Activated naive CD4-positive, alpha-beta T cell treated with anti-CD3 and anti-CD28 coated beads for 36 hours (primary cell): ENCODE measurements at regions of chr17 and their contacts with region 1.

Region 1: GRCh38 chr17:29252101-29252866 is 5.6 kb downstream of the CRYBA1 start:
- DNase-seq: no peak
- H3K4me3 Mint-ChIP-seq: no peak overlapping the region
- H3K27ac Mint-ChIP-seq: no peak overlapping the region
- H3K4me1 Mint-ChIP-seq: peaks cover 11% of the 10 kb centered on the region
- H3K27me3 Mint-ChIP-seq: no peaks in the 10 kb centered on the region

Region 2: DNA sequence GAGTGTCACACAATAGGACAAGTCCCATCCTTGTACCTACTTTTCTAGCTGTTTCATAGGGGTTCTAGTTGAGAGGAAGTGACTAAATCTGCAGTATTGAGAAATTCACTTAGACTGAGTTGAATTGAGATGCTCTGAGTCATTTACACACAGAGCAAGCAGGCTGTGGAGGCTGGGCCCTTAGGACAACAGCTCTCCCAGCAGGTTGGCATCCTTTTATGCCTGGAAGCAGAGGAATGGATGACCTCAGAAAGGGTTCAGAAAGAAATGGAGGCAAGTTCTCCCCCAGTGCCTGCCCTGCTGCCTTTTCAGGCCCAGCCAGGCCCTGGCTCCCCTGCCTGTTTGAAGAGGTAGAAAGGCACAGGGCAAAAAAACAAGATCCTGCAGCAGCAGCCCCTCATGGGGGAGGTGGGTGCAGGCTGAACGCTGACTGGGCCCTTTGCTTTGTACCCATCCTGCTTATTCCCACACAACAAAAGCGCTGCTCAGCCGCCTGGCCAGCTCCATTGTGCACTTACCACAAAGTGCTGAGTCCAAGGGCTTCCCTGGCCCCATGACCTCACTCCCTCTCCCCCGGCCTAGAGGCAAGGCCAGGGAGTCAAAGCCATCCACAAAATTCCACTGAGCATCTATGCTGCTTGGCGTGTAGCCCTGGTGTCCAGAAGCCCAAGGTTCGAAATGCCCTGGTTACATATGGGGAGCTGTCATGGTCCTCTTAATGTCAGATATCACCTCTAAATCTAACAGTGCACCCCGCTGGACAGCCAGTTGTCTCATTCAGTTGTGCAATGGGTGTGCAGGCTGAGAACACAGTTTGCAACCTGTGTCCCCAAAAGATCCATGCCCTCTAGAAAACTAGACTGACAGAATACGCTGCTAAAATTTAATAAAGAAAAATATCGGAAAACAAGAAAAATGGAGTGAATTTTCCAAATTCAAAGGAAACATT is 11.0 kb before region 1 on chr17:
- CTCF ChIA-PET with region 1: interaction called, 11 read pairs
- intact Hi-C with region 1: no loop called
- DNase-seq: peak; percentile 66
- H3K4me3 Mint-ChIP-seq: no peak overlapping the region
- H3K27ac Mint-ChIP-seq: no peak overlapping the region
- H3K4me1 Mint-ChIP-seq: peaks cover 14% of the 10 kb centered on the region
- H3K27me3 Mint-ChIP-seq: no peaks in the 10 kb centered on the region

Region 3: GRCh38 chr17:29331708-29332085 is 79.4 kb after region 1 on chr17:
- CTCF ChIA-PET with region 1: no interaction called
- intact Hi-C with region 1: no loop called
- DNase-seq: no peak
- H3K4me3 Mint-ChIP-seq: no peak overlapping the region
- H3K27ac Mint-ChIP-seq: no peak overlapping the region
- H3K4me1 Mint-ChIP-seq: no peaks in the 10 kb centered on the region
- H3K27me3 Mint-ChIP-seq: no peaks in the 10 kb centered on the region

Region 4: GRCh38 chr17:29345086-29345869 is 93.0 kb after region 1 on chr17:
- CTCF ChIA-PET with region 1: no interaction called
- intact Hi-C with region 1: no loop called
- DNase-seq: no peak
- H3K4me3 Mint-ChIP-seq: no peak overlapping the region
- H3K27ac Mint-ChIP-seq: no peak overlapping the region
- H3K4me1 Mint-ChIP-seq: no peaks in the 10 kb centered on the region
- H3K27me3 Mint-ChIP-seq: no peaks in the 10 kb centered on the region

Region 5: DNA sequence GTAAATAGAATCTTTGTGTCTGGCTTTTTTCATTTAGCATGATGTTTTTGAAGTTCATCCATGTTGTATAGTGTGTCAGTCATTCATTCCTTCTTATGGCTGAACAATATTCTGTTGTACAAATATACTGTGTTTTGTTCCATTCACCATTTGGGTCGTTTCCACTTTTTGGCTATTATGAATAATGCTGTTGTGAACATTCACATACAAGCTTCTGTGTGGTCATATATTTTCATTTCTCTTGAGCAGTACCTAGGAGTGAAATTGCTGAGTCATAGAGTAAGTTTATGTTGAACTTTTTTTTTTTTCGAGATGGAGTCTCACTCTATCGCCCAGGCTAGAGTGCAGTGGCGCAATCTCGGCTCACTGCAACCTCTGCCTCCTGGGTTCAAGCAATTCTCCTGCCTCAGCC is 105.5 kb after region 1 on chr17:
- CTCF ChIA-PET with region 1: no interaction called
- intact Hi-C with region 1: no loop called
- DNase-seq: no peak
- H3K4me3 Mint-ChIP-seq: no peak overlapping the region
- H3K27ac Mint-ChIP-seq: no peak overlapping the region
- H3K4me1 Mint-ChIP-seq: no peaks in the 10 kb centered on the region
- H3K27me3 Mint-ChIP-seq: no peaks in the 10 kb centered on the region